Left ventricle myocardium inferior (tissue), 1 donor: ENCODE measurements at regions of chr3 and their contacts with region 1.

Region 1: DNA sequence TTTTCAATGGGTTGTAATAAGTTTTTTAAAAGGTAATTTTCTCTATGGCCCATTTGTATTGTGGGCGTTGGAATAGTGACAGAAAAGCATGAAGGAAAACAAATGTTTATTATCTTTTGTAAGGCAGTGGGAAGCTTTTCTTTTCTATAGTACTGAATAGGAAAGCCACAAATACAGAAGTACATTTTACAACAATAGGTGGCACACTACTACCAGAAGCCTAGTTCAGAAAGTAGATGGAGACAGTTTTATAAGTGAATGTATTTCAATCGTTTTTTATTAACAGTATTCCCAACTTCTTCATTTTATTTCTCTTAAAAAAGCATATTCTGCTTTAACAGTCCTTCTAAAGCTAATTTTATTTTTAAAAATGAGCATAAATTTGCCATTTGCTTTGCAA is 296.7 kb downstream of the PTPRG start:
- DNase-seq: no peak
- H3K4me3 ChIP-seq: no peak overlapping the region
- H3K27ac ChIP-seq: no peak overlapping the region
- H3K4me1 ChIP-seq: peaks cover 77% of the 10 kb centered on the region
- H3K27me3 ChIP-seq: no peaks in the 10 kb centered on the region
- CTCF ChIP-seq: peak; percentile 76

Region 2: DNA sequence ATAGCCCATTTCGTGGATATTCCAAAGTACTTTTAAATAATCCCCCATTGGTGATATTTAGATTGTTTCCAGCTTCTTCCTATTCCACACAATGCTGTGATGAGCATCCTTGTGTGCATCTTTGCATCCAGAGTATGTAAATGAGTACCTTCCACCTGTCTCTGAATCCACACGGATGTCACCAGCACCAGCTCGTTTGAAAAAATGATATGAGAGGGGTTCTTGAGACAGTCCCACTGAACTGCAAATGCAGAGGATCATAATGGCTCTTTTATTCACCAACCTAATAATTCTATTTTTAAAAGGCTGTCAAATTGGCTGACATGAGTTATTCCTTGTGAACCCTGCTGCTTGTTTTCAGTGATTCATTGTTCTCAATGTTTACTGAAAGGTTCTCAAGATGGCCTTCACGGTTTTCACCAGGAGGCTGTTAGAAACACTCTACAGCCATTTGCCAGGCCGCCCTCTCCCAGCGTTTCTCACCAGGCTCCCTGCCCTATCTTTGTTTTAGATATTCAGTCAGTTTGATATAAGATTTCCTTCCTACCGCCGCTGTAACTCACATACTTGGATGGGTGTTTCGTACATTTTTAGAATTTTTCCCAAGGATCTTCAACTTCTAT is 393.4 kb before region 1 on chr3:
- intact Hi-C with region 1: no loop called
- DNase-seq: no peak
- H3K4me3 ChIP-seq: no peak overlapping the region
- H3K27ac ChIP-seq: no peak overlapping the region
- H3K4me1 ChIP-seq: peaks cover 5% of the 10 kb centered on the region
- H3K27me3 ChIP-seq: no peaks in the 10 kb centered on the region
- CTCF ChIP-seq: no peak

Region 3: DNA sequence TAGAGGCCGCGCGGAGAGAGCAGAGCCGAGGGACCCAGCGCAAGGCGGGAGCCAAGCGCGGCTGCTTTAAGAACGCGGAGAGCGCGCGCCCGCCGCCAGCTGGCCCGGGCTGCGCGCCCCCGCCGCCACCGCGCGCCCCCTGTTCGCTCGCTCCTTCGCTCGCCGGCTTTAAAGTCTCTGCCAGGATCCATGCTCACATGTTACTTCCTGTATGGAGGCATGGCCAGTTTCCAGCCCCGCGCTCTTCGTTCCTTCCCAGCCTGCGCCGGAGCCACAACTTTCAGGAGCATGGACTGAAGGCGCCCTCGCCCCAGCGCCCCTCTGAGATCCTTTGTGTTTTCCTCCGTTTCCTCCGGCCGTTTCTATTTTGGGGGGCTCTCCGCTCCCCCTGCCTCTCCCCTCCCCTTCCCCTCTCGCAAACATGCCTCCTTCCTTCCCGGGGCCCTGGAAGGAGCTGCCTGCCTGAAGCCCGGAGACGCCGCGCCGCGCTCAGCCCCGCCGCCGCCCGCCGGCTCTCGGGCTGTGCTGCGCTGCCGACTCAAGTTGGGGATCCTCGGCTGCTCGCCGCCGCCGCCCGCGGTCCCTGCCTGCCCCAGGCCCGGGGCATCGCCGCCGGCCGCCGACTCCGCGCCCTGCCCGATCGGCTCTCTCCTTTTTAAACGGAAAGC is 296.5 kb before region 1 on chr3 and contains the start of gene PTPRG:
- intact Hi-C with region 1: loop called (anchors 10 kb)
- DNase-seq: peak; percentile 91
- H3K4me3 ChIP-seq: peak within 1 kb of the TSS; percentile 85
- H3K27ac ChIP-seq: peak within 1 kb of the TSS; percentile 99
- H3K4me1 ChIP-seq: peaks cover 70% of the 10 kb centered on the region
- H3K27me3 ChIP-seq: no peaks in the 10 kb centered on the region
- CTCF ChIP-seq: no peak
- total RNA-seq, gene PTPRG: 29.6 TPM

Region 4: GRCh38 chr3:61783993-61784718 is 73.9 kb before region 1 on chr3:
- intact Hi-C with region 1: no loop called
- DNase-seq: no peak
- H3K4me3 ChIP-seq: no peak overlapping the region
- H3K27ac ChIP-seq: no peak overlapping the region
- H3K4me1 ChIP-seq: peaks cover 46% of the 10 kb centered on the region
- H3K27me3 ChIP-seq: no peaks in the 10 kb centered on the region
- CTCF ChIP-seq: no peak